CD4-positive, alpha-beta T cell (primary cell): ENCODE measurements at regions of chr4 and their contacts with region 1.

Region 1: GRCh38 chr4:84966383-84967242 is at the start of gene WDFY3:
- DNase-seq: peak in 3 of 14 experiments; percentile 5 to 60 (median 55)
- ATAC-seq: no peak
- H3K4me3 ChIP-seq: peak within 1 kb of the TSS; percentile 43
- H3K4me3 Mint-ChIP-seq: peak within 1 kb of the TSS; percentile 79
- H3K27ac ChIP-seq: no peak within 1 kb of the TSS
- H3K27ac Mint-ChIP-seq: no peak within 1 kb of the TSS
- H3K4me1 ChIP-seq: peaks cover 11% of the 10 kb centered on the region
- H3K4me1 Mint-ChIP-seq: peaks cover 11% of the 10 kb centered on the region
- H3K27me3 ChIP-seq: peaks cover 15 to 56% of the 10 kb centered on the region in 2 experiments
- H3K27me3 Mint-ChIP-seq: peaks cover 68% of the 10 kb centered on the region
- CTCF ChIP-seq: no peak
- total RNA-seq, gene WDFY3: 0.60 to 0.75 TPM

Region 2: GRCh38 chr4:84582302-84583000 is 384.2 kb before region 1 on chr4:
- CTCF ChIA-PET with region 1: interaction called, 4 read pairs
- POLR2A ChIA-PET with region 1: no interaction called
- intact Hi-C with region 1: loop called (anchors 2 to 5 kb)
- DNase-seq: peak; percentile 76 to 97 (median 92)
- ATAC-seq: peak; percentile 80
- H3K4me3 ChIP-seq: peak overlapping the region; percentile 56
- H3K4me3 Mint-ChIP-seq: peak overlapping the region; percentile 68
- H3K27ac ChIP-seq: no peak overlapping the region
- H3K27ac Mint-ChIP-seq: peak overlapping the region; percentile 8
- H3K4me1 ChIP-seq: peaks cover 17% of the 10 kb centered on the region
- H3K4me1 Mint-ChIP-seq: peaks cover 15% of the 10 kb centered on the region
- H3K27me3 ChIP-seq: peaks cover 9 to 10% of the 10 kb centered on the region in 2 experiments
- H3K27me3 Mint-ChIP-seq: peaks cover 38% of the 10 kb centered on the region
- CTCF ChIP-seq: no peak

Region 3: GRCh38 chr4:84750253-84750959 is 216.2 kb before region 1 on chr4:
- CTCF ChIA-PET with region 1: no interaction called
- POLR2A ChIA-PET with region 1: no interaction called
- intact Hi-C with region 1: loop called in 1 of 2 experiments (anchors 2 kb)
- DNase-seq: peak in 2 of 14 experiments; percentile 22 to 24
- ATAC-seq: no peak
- H3K4me3 ChIP-seq: no peak overlapping the region
- H3K4me3 Mint-ChIP-seq: no peak overlapping the region
- H3K27ac ChIP-seq: no peak overlapping the region
- H3K27ac Mint-ChIP-seq: no peak overlapping the region
- H3K4me1 ChIP-seq: no peaks in the 10 kb centered on the region
- H3K4me1 Mint-ChIP-seq: no peaks in the 10 kb centered on the region
- H3K27me3 ChIP-seq: no peaks in the 10 kb centered on the region
- H3K27me3 Mint-ChIP-seq: peaks cover 9% of the 10 kb centered on the region
- CTCF ChIP-seq: peak; percentile 76